Aorta (tissue), 5 donors: ENCODE measurements at regions of chr9 and their contacts with region 1.

Region 1: GRCh38 chr9:68577774-68578591 is 37.3 kb upstream of the TMEM252 start:
- DNase-seq: no peak
- ATAC-seq: no peak
- H3K4me3 ChIP-seq: no peak overlapping the region
- H3K27ac ChIP-seq: no peak overlapping the region
- H3K4me1 ChIP-seq: no peaks in the 10 kb centered on the region
- H3K27me3 ChIP-seq: no peaks in the 10 kb centered on the region

Region 2: DNA sequence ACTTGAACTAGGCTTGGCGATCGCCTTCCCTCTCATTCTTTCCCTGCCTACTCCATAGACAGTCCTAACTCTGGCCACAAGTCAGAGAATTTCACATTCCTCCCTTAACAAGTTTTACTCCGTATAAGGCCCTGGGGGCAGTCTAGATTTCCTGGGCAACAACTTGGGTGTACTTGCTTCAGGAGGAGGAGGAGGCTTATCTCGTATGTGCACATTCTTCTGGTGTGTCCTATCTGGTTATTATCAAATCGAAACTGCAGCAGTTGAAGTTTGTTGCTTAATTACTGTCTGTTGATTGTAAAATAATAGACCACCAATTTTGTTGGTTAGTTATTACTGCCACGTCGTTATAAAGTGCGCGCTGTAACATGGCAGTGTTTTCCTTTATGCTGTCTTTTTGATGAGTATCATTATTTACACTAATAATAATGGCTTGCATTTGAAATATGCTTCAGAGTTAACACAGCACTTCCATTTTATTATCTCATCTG is 169.1 kb after region 1 on chr9:
- intact Hi-C with region 1: no loop called
- DNase-seq: no peak
- ATAC-seq: no peak
- H3K4me3 ChIP-seq: no peak overlapping the region
- H3K27ac ChIP-seq: no peak overlapping the region
- H3K4me1 ChIP-seq: peaks cover 0 to 7% of the 10 kb centered on the region in 2 donors
- H3K27me3 ChIP-seq: no peaks in the 10 kb centered on the region

Region 3: DNA sequence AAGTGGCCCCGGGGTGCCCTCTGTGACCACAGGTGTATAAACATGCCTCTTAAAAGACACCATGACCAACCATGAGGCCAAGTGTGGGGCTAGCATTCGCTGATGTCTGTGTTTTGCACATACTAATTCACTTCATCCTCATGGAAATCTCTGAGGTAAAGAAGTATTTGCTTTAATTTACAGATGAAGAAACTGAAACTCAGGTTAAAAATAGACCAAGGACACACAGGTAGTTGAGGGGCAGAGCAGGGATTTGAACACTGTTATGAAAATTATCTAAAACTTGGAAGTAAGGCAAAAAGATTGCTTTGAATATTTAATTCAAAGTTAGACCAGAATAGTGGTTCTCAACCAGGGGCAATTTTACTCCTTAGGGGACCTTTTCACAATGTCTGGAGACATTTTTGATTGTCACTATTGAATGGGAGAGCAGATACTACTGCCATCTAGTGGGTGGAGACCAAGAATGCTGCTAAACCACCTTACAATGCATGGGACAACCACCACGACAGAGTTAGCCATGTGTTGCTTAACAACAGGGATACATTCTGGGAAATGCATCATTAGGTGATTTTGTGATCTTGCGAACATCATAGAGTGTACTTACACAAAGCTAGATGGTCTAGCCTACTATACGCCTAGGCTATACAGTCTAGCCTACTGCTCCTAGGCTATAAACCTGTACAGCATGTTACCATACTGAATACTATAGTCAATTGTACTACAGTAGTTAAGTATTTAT is 449.5 kb after region 1 on chr9:
- intact Hi-C with region 1: loop called in 1 of 2 experiments (anchors 10 kb)
- DNase-seq: no peak
- ATAC-seq: no peak
- H3K4me3 ChIP-seq: no peak overlapping the region
- H3K27ac ChIP-seq: no peak overlapping the region
- H3K4me1 ChIP-seq: no peaks in the 10 kb centered on the region
- H3K27me3 ChIP-seq: no peaks in the 10 kb centered on the region